ENCODE measurements at regions of chr3 and their contacts with region 1.

Region 1: GRCh38 chr3:195863121-195864006 is 45.0 kb downstream of the TNK2 start:
- DNase-seq: peak; percentile 82 to 91
- ATAC-seq: peak; percentile 96

Region 2: GRCh38 chr3:195458316-195458717 is 405.0 kb before region 1 on chr3:
- intact Hi-C with region 1: no loop called
- DNase-seq: no peak
- ATAC-seq: peak; percentile 73

Region 3: GRCh38 chr3:195909644-195910508 is 46.5 kb after region 1 on chr3:
- intact Hi-C with region 1: loop called (anchors 2 to 10 kb)
- DNase-seq: peak; percentile 85 to 89
- ATAC-seq: peak; percentile 73